ENCODE measurements at regions of chr16 and their contacts with region 1.

Region 1: GRCh38 chr16:67928561-67929364 is 2.9 kb downstream of the CTRL start:
- DNase-seq: peak; percentile 69
- ATAC-seq: peak; percentile 63 to 68

Region 2: DNA sequence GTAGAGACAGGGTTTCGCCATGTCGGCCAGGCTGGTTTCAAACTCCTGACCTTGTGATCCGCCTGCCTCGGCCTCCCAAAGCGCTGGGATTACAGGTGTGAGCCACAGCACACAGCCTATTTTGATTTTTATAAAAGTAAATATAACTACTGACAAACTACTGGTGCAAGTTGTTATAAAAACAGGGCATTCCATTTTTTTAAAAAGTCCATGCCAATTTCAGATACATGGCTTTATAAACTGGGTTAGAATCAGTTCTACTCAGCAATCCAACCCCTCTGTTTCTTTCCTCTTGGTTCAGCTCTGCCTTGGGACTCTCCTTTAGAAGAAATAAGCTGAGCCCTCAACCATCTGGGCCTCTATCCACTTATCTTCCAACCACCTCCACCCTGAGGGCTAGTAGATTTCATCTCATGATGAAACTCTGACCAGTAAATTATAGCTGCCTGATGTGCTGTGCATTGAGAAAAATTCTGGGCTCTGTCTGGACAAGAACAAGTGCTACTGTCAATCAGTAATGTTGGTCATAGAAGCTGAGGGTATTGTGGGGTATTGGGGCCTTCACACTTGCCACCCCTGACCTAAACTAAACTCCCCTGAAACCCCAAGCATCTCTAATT is 132.6 kb before region 1 on chr16:
- intact Hi-C with region 1: no loop called
- DNase-seq: no peak
- ATAC-seq: no peak

Region 3: DNA sequence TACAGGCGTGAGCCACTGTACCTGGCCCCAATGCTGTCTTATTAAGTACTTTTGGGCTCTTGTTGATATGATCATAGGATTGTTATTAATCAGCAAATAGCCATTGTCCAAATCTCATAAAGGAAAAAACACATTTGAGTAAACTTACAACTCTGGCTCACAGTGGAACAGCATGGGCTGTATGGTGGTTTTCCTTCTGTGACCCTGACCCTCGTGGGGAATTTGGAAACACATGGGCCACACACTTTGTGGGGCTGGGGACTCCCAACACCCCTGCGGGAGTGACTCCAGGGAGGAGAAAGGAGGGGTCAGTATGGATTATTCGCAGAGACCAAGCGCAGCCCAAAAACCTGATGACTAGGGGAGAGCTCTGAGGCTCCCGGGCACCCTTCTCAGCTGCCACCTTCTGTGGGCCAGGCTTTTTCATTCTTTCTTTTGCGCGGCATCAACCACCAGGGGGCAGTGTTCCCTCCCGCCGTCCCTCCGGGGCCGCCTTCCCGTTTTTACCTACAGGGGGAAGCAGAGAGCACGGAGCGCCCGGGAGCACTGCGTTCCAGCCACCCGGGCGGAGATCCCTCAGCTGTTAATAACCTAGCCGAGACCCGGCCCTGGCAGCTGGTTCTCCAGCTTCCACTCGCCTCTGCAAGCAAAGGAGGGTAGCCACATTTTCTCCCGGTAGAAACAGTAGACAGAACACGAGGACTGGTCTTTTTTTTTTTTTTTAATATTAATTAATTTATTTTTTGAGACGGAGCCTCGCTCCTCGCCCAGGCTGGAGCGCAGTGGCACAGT is 112.3 kb before region 1 on chr16:
- intact Hi-C with region 1: loop called (anchors 2 to 5 kb)
- DNase-seq: peak; percentile 87
- ATAC-seq: peak; percentile 95

Region 4: GRCh38 chr16:67883872-67884261 is 44.9 kb before region 1 on chr16:
- intact Hi-C with region 1: loop called (anchors 5 kb)
- DNase-seq: peak; percentile 63
- ATAC-seq: peak; percentile 54 to 69

Region 5: GRCh38 chr16:68074850-68075555 is 146.2 kb after region 1 on chr16:
- intact Hi-C with region 1: no loop called
- DNase-seq: no peak
- ATAC-seq: peak in 1 of 2 donors; percentile 20

Measured in left cardiac atrium (tissue), 4 donors.